Mammary epithelial cell (primary cell): ENCODE measurements at regions of chr1 and their contacts with region 1.

Region 1: DNA sequence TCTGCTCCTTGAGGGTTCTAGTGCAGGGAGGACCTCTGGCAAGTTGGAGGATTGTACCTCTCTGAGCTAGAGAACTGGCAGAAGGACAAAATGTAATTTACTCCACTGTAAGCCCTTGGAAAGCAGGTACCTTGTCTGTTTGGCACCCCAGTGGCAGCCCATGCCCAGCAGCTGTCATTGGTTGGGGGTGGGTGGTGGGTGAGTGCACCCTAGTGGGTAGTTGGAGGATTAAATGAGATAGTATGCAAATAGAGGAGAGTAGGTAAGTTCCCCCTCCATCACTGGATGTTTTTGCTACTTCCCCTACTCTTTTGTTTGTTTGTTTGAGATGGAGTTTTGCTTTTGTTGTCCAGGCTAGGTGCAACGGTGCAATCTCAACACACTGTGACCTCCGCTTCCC is 69.8 kb downstream of the RYR2 start:
- DNase-seq: no peak
- H3K4me3 ChIP-seq: no peak overlapping the region
- H3K27ac ChIP-seq: no peak overlapping the region
- H3K4me1 ChIP-seq: no peaks in the 10 kb centered on the region
- H3K27me3 ChIP-seq: no peaks in the 10 kb centered on the region
- CTCF ChIP-seq: no peak

Region 2: DNA sequence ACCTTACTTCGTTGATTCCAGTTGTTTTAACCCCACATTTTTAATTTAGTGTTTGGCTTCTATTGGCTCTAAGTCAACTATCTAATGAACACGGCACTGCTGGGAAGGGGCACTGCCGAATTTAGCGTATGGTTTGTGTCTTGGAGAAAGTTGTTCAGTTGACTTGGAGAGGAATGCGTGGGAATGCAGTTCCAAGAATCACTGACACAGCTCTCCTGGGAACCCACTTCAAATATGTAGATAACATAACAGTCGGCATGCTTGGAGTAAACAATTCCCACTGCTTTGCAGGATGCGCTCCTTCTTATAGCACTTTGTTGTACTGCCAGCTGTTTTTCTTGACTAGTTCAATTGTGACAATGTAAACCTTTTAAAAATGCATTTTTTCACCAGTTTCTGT is 34.4 kb after region 1 on chr1:
- CTCF ChIA-PET with region 1: no interaction called
- dilution Hi-C with region 1: loop called (anchors 5 kb)
- in situ Hi-C with region 1: no loop called
- intact Hi-C with region 1: no loop called
- DNase-seq: no peak
- H3K4me3 ChIP-seq: no peak overlapping the region
- H3K27ac ChIP-seq: no peak overlapping the region
- H3K4me1 ChIP-seq: no peaks in the 10 kb centered on the region
- H3K27me3 ChIP-seq: no peaks in the 10 kb centered on the region
- CTCF ChIP-seq: no peak

Region 3: DNA sequence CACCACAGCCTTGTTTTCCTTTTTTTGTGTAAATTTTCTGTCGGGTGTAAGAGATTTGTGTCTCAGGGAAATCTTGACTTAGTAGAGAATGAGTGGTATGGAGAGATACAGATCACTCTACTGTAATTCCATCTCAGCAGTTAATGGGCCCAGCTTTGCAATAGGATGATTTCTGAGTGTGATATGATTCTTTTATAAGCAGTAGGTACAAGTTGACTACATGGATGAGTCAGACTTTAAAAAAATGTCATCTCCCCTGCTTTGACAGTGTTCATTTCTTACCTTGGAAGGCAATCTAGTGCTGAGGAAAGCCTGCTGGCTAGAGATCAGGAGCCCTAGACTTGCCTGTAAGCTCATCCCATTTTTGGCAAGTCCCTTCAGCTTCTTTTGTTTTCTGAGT is 192.1 kb after region 1 on chr1:
- CTCF ChIA-PET with region 1: no interaction called
- dilution Hi-C with region 1: no loop called
- in situ Hi-C with region 1: no loop called
- intact Hi-C with region 1: no loop called
- DNase-seq: no peak
- H3K4me3 ChIP-seq: no peak overlapping the region
- H3K27ac ChIP-seq: no peak overlapping the region
- H3K4me1 ChIP-seq: no peaks in the 10 kb centered on the region
- H3K27me3 ChIP-seq: no peaks in the 10 kb centered on the region
- CTCF ChIP-seq: no peak